ENCODE measurements at regions of chr2 and their contacts with region 1.

Region 1: DNA sequence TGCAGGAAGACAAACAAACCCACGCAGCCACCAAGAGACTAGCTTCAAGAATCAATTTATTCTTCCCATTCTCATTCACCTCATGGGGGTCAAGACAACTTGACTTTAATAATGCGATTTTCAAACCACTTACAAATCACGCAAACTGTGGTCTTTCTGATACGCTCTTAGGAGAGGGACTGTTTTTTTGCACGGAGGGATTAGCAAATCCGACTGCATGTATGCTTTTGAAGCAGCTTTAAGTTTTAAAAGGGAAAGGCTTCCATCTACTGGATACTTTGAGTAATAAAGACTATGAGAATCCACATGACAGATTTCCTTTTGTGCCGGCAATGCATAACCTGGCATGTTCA is 322.9 kb upstream of the KCNJ3 start:
- DNase-seq: peak; percentile 74
- H3K4me3 ChIP-seq: peak overlapping the region; percentile 8
- H3K27ac ChIP-seq: no peak overlapping the region
- H3K4me1 ChIP-seq: no peaks in the 10 kb centered on the region
- H3K27me3 ChIP-seq: peaks cover 54% of the 10 kb centered on the region
- CTCF ChIP-seq: peak; percentile 57

Region 2: GRCh38 chr2:152740743-152741328 is 1634.7 kb before region 1 on chr2:
- CTCF ChIA-PET with region 1: no interaction called
- POLR2A ChIA-PET with region 1: no interaction called
- intact Hi-C with region 1: loop called (anchors 10 kb)
- DNase-seq: peak; percentile 78
- H3K4me3 ChIP-seq: no peak overlapping the region
- H3K27ac ChIP-seq: no peak overlapping the region
- H3K4me1 ChIP-seq: no peaks in the 10 kb centered on the region
- H3K27me3 ChIP-seq: no peaks in the 10 kb centered on the region
- CTCF ChIP-seq: peak; percentile 84

Region 3: DNA sequence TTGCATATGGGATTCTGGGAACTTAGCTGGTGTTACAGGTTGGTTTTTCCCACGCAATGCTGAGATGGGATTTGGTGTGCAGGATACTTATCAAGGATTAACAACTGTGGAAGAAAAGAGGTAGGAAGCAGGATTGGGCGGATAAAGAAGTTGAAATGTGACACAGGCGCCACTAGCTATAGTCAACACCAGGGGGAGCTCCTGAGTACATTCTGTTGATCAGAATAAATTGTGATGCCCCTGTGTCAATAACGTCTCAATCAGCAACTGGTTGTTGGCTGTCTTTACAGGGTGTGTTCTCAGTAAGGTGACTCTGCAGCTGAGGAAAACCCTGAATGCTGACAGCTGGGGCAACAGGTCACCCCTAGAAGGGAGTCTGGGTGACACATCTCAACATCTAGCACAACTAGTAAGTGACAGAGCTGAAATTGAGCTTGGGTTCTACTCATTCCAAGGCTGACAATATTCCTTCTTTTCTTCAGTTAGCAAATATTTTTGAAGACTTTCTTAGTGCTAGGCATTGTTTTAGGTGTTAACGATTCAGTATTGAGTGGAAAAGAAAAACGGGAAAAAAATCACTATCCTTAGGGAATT is 1514.1 kb before region 1 on chr2:
- CTCF ChIA-PET with region 1: no interaction called
- POLR2A ChIA-PET with region 1: no interaction called
- intact Hi-C with region 1: loop called (anchors 2 kb)
- DNase-seq: peak; percentile 46
- H3K4me3 ChIP-seq: no peak overlapping the region
- H3K27ac ChIP-seq: no peak overlapping the region
- H3K4me1 ChIP-seq: no peaks in the 10 kb centered on the region
- H3K27me3 ChIP-seq: no peaks in the 10 kb centered on the region
- CTCF ChIP-seq: peak; percentile 76

Region 4: GRCh38 chr2:152925547-152926327 is 1449.8 kb before region 1 on chr2:
- CTCF ChIA-PET with region 1: no interaction called
- POLR2A ChIA-PET with region 1: no interaction called
- intact Hi-C with region 1: loop called (anchors 5 kb)
- DNase-seq: peak; percentile 87
- H3K4me3 ChIP-seq: no peak overlapping the region
- H3K27ac ChIP-seq: no peak overlapping the region
- H3K4me1 ChIP-seq: no peaks in the 10 kb centered on the region
- H3K27me3 ChIP-seq: peaks cover 11% of the 10 kb centered on the region
- CTCF ChIP-seq: peak; percentile 94

Region 5: DNA sequence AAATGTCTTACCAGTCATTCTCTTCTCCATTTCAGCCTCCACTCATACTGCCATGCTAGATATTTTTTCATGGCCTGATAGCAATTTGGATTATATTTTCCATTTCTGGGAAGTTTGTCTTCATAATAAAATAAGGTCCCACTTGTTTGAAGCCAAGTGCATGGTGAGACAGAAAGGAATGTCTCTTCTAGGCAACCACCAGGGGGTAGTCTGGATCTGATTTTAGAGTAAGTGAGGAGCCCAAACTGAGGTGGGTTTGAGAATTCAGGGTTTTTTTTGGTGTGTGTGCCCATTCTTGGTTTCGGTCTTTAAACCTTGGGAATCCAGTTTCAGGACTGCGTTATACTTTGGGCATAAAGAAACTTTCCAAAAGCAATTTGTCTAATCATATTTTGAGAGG is 1212.5 kb before region 1 on chr2:
- CTCF ChIA-PET with region 1: no interaction called
- POLR2A ChIA-PET with region 1: no interaction called
- intact Hi-C with region 1: loop called (anchors 5 kb)
- DNase-seq: peak; percentile 51
- H3K4me3 ChIP-seq: no peak overlapping the region
- H3K27ac ChIP-seq: no peak overlapping the region
- H3K4me1 ChIP-seq: no peaks in the 10 kb centered on the region
- H3K27me3 ChIP-seq: no peaks in the 10 kb centered on the region
- CTCF ChIP-seq: peak; percentile 61

Region 6: GRCh38 chr2:153622285-153622684 is 753.3 kb before region 1 on chr2:
- CTCF ChIA-PET with region 1: no interaction called
- POLR2A ChIA-PET with region 1: no interaction called
- intact Hi-C with region 1: loop called (anchors 10 kb)
- DNase-seq: peak; percentile 1
- H3K4me3 ChIP-seq: no peak overlapping the region
- H3K27ac ChIP-seq: no peak overlapping the region
- H3K4me1 ChIP-seq: no peaks in the 10 kb centered on the region
- H3K27me3 ChIP-seq: no peaks in the 10 kb centered on the region
- CTCF ChIP-seq: peak; percentile 39; the same call in 1 of the 2 replicates

Region 7: DNA sequence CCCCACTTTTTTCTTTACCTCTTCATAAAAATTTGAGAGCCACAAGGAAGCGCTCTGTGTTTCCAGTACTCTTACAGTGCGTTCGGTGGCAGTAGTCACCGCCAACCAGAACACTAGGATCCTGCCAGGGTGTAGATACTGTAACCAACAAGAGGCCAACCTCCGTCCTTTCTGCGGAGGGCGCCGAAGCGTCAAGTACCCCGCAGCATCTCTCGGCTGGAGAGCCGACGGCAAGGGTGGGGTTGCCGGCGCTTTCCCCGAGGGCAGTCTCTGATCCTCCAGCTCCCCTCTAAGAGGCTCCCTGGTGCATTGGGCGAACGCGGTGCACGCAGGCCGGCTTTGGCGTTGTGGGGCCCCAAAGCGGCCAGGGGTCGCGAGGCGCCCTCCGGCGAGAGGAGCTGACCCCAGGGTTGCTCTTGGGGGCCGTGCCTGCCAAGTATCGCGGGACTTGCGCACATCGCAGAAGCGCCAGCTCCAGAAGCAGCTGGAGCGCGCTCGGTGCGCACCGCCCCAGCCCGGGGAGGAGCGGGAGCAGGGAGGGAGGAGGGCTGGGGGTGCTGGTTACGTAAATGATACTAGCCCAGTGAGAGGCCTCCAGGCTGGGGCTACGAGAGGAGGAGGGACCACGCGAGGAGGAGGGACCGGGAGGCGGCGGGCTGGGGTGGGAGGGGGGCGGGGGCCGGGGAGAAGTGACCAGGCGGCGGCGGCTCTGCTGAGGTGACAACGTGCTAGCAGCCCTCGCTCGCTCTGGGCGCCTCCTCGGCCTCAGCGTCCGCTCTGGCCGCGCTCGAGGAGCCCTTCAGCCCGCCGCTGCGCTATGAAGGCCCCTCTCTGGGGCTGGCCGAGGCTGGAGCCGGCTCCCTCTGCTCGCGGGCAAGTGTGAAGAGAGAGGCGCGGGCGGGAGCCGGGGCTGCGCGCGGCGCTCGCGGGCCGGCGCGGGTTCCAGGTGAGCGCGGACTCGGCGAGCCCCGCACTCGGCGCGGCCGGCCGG is 504.0 kb before region 1 on chr2 and contains the start of gene GALNT13:
- CTCF ChIA-PET with region 1: no interaction called
- POLR2A ChIA-PET with region 1: no interaction called
- intact Hi-C with region 1: loop called (anchors 10 kb)
- DNase-seq: no peak
- H3K4me3 ChIP-seq: no peak within 1 kb of the TSS
- H3K27ac ChIP-seq: no peak within 1 kb of the TSS
- H3K4me1 ChIP-seq: no peaks in the 10 kb centered on the region
- H3K27me3 ChIP-seq: peaks cover 65% of the 10 kb centered on the region
- CTCF ChIP-seq: no peak
- total RNA-seq, gene GALNT13: not detected in 2 replicates

Region 8: GRCh38 chr2:153886833-153887232 is 488.7 kb before region 1 on chr2:
- CTCF ChIA-PET with region 1: no interaction called
- POLR2A ChIA-PET with region 1: no interaction called
- intact Hi-C with region 1: no loop called
- DNase-seq: no peak
- H3K4me3 ChIP-seq: no peak overlapping the region
- H3K27ac ChIP-seq: no peak overlapping the region
- H3K4me1 ChIP-seq: no peaks in the 10 kb centered on the region
- H3K27me3 ChIP-seq: no peaks in the 10 kb centered on the region
- CTCF ChIP-seq: no peak

Region 9: GRCh38 chr2:154658854-154659253 is 283.3 kb after region 1 on chr2:
- CTCF ChIA-PET with region 1: no interaction called
- POLR2A ChIA-PET with region 1: no interaction called
- intact Hi-C with region 1: no loop called
- DNase-seq: no peak
- H3K4me3 ChIP-seq: no peak overlapping the region
- H3K27ac ChIP-seq: no peak overlapping the region
- H3K4me1 ChIP-seq: no peaks in the 10 kb centered on the region
- H3K27me3 ChIP-seq: no peaks in the 10 kb centered on the region
- CTCF ChIP-seq: no peak

Region 10: GRCh38 chr2:155825876-155826275 is 1450.3 kb after region 1 on chr2:
- CTCF ChIA-PET with region 1: no interaction called
- POLR2A ChIA-PET with region 1: no interaction called
- intact Hi-C with region 1: no loop called
- DNase-seq: no peak
- H3K4me3 ChIP-seq: no peak overlapping the region
- H3K27ac ChIP-seq: no peak overlapping the region
- H3K4me1 ChIP-seq: no peaks in the 10 kb centered on the region
- H3K27me3 ChIP-seq: no peaks in the 10 kb centered on the region
- CTCF ChIP-seq: no peak